WTC11 (cell line): ENCODE measurements at regions of chr5 and their contacts with region 1.

Region 1: GRCh38 chr5:41270423-41271251 is 57.3 kb upstream of the C6 start:
- DNase-seq: peak; percentile 25
- ATAC-seq: peak; percentile 90
- H3K4me3 Mint-ChIP-seq: no peak overlapping the region
- H3K27ac Mint-ChIP-seq: no peak overlapping the region
- H3K4me1 Mint-ChIP-seq: no peaks in the 10 kb centered on the region
- H3K27me3 Mint-ChIP-seq: no peaks in the 10 kb centered on the region
- CTCF ChIP-seq: peak; percentile 52

Region 2: GRCh38 chr5:41410737-41411136 is 140.1 kb after region 1 on chr5:
- CTCF ChIA-PET with region 1: interaction called, 18 read pairs
- POLR2A ChIA-PET with region 1: no interaction called
- DNase-seq: peak; percentile 33
- ATAC-seq: peak; percentile 82
- H3K4me3 Mint-ChIP-seq: no peak overlapping the region
- H3K27ac Mint-ChIP-seq: no peak overlapping the region
- H3K4me1 Mint-ChIP-seq: no peaks in the 10 kb centered on the region
- H3K27me3 Mint-ChIP-seq: no peaks in the 10 kb centered on the region
- CTCF ChIP-seq: no peak

Region 3: DNA sequence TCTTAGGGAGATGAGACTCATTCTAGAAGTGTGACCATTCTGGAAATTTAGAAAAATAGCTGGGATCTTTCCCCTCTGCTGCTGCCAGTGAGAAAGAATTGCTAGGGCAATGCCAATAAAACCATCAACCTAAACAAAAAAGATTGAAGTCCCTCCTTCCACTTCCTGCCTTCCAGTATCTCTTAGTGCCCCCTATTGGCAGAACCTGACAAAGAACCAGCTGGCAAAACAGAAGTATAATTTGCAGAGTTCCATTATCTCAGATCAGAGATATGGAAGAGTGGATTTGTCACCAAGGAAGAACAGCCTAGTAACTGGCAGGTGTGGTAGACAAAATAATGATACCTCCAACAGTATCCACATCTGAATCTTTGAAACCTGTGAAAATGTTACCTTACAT is 253.5 kb after region 1 on chr5:
- CTCF ChIA-PET with region 1: interaction called, 20 read pairs
- POLR2A ChIA-PET with region 1: no interaction called
- DNase-seq: peak; percentile 19
- ATAC-seq: peak; percentile 65
- H3K4me3 Mint-ChIP-seq: no peak overlapping the region
- H3K27ac Mint-ChIP-seq: no peak overlapping the region
- H3K4me1 Mint-ChIP-seq: peaks cover 10% of the 10 kb centered on the region
- H3K27me3 Mint-ChIP-seq: no peaks in the 10 kb centered on the region
- CTCF ChIP-seq: no peak; the same call in 1 of the 2 replicates

Region 4: DNA sequence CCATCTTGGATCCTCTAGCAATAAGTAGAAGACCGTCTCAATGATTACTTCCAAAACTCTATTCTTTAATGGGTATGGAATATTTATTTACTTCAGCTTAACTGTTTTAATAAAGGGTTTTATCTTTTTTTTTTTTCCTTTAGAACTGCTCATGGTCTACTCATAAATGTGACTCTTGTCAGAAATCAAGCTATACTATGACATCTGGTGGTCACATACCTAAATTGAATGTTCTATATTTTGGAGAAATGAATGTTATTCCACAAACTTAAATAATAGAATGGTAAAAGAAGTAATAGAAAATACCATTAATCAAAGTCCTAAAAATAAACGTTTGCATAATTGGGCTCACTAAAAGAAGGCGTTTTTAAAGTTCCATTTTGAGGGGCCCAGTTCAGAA is 371.0 kb after region 1 on chr5:
- CTCF ChIA-PET with region 1: interaction called, 12 read pairs
- POLR2A ChIA-PET with region 1: no interaction called
- DNase-seq: no peak
- ATAC-seq: no peak
- H3K4me3 Mint-ChIP-seq: no peak overlapping the region
- H3K27ac Mint-ChIP-seq: no peak overlapping the region
- H3K4me1 Mint-ChIP-seq: peaks cover 13% of the 10 kb centered on the region
- H3K27me3 Mint-ChIP-seq: no peaks in the 10 kb centered on the region
- CTCF ChIP-seq: no peak